ENCODE measurements at regions of chr13 and their contacts with region 1.

Region 1: GRCh38 chr13:33228648-33229445 is 56.7 kb downstream of the STARD13 start:
- DNase-seq: peak in 4 of 14 experiments; percentile 21 to 64 (median 57)
- ATAC-seq: peak; percentile 43
- H3K4me3 ChIP-seq: no peak overlapping the region
- H3K4me3 Mint-ChIP-seq: no peak overlapping the region
- H3K27ac ChIP-seq: no peak overlapping the region
- H3K27ac Mint-ChIP-seq: no peak overlapping the region
- H3K4me1 ChIP-seq: no peaks in the 10 kb centered on the region
- H3K4me1 Mint-ChIP-seq: peaks cover 5% of the 10 kb centered on the region
- H3K27me3 ChIP-seq: no peaks in the 10 kb centered on the region
- H3K27me3 Mint-ChIP-seq: no peaks in the 10 kb centered on the region
- CTCF ChIP-seq: peak; percentile 97

Region 2: DNA sequence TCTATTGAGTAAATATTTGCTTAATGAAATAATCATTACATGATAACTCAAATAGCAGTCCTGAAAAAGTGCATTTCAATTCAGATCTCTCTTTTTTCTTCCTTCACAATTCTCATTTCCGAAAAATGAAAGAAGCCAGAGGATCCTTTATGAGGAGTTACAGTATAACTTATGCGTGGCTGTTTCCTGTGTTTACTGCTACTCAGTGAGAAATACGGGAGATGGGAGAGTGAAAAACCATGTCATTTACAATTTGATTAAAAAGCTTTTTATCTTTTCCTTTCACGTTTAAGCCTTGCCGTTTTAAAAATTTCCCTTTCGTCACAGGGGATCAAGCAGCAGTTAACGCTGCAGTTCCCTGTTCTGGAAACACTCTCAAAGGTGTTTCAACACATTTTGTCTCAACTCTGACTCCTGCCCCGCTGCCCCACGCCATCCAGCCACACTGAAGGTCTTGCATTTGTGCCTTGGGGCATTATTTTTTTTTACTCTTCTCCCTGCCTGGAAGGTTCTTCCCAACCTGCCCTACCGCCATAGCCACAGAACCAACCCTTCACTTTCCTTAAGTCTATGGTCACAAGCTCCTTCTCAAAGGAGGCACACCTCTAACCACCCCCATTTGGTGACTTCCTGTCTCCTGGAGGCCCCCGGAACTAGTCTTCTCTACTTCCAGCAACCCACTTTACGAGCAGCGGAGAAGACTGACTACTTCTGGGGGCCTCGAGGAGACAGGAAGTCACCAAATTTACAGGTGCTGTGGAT is 195.6 kb before region 1 on chr13:
- CTCF ChIA-PET with region 1: no interaction called
- POLR2A ChIA-PET with region 1: no interaction called
- intact Hi-C with region 1: no loop called
- DNase-seq: peak in 7 of 14 experiments; percentile 2 to 45 (median 29)
- ATAC-seq: peak; percentile 70
- H3K4me3 ChIP-seq: peak overlapping the region; percentile 31
- H3K4me3 Mint-ChIP-seq: peak overlapping the region; percentile 84
- H3K27ac ChIP-seq: no peak overlapping the region
- H3K27ac Mint-ChIP-seq: peak overlapping the region; percentile 77
- H3K4me1 ChIP-seq: no peaks in the 10 kb centered on the region
- H3K4me1 Mint-ChIP-seq: peaks cover 9% of the 10 kb centered on the region
- H3K27me3 ChIP-seq: peaks cover 0 to 4% of the 10 kb centered on the region in 2 experiments
- H3K27me3 Mint-ChIP-seq: peaks cover 14% of the 10 kb centered on the region
- CTCF ChIP-seq: no peak

Region 3: DNA sequence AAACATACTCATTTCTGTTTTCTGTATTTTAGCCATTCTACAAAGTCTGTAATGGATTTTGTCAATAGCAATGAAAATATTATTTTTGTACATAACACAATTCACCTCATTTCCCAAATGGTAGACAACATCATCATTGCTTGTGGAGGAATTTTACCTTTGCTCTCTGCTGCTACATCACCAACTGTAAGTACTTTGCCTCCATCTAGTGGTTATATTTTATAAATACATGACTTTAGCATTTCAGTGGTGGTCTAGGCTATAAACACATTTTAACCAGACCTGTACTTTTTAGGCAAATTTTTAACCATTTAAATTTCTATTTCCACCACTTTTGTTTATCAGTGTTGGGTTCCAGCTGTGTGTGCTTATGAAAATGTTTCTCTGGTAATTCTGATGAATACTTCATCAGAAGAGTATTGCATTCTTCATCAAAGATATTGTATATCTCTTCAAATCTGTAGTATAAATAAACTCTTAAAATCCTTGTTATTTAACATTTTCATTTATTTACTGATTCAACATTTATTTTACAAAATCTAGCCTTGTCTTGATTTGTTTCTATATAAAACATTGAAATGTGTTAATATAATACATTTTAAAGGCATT is 1935.6 kb after region 1 on chr13:
- CTCF ChIA-PET with region 1: no interaction called
- POLR2A ChIA-PET with region 1: no interaction called
- intact Hi-C with region 1: loop called (anchors 5 to 10 kb)
- DNase-seq: peak in 3 of 14 experiments; percentile 26 to 43 (median 37)
- ATAC-seq: peak; percentile 49
- H3K4me3 ChIP-seq: no peak overlapping the region
- H3K4me3 Mint-ChIP-seq: no peak overlapping the region
- H3K27ac ChIP-seq: no peak overlapping the region
- H3K27ac Mint-ChIP-seq: no peak overlapping the region
- H3K4me1 ChIP-seq: no peaks in the 10 kb centered on the region
- H3K4me1 Mint-ChIP-seq: peaks cover 6% of the 10 kb centered on the region
- H3K27me3 ChIP-seq: no peaks in the 10 kb centered on the region
- H3K27me3 Mint-ChIP-seq: no peaks in the 10 kb centered on the region
- CTCF ChIP-seq: peak; percentile 83